ENCODE measurements at regions of chr1 and their contacts with region 1.

Region 1: DNA sequence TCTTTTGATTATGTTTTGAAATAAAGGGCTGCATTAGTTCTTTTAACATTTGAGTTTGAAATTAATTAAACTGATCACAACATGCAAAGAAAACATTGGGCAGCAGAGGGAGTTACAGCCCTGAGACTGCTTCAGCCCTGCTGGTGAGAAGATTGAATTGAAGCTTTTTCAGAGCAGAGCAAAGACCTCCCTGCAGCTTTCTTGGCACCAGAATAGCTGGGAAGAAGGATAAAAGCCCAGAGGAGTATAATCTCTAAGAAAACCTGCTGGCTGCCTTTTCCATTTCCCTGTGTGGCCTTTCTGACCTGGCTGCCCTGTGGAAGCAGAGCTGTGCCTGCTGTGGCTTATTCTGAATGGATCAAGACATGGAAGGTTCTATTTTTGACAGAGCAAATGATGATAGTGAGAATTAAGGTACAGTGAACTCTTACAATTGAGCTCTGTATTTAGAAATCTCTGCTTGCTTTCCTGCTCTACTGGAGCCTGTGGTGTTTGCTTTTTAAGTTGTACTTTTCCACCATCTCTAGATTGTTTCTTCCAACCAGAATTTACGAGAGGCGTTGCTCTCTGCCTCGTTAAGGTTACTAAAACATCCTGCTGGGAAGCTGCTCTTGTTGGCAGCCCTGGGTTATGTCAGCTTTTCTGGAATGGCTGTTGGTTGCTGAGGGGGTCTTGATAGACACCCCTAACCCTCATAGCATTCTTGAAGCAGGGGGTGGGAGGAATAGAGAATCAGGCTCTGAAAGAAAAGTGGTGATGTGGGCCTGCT is 9.9 kb downstream of the SNRPE start:
- DNase-seq: peak; percentile 70
- H3K4me3 ChIP-seq: no peak overlapping the region; a peak in 1 of 4 replicates
- H3K27ac ChIP-seq: 0 out of 4 replicates have a peak overlapping the region, but pooled peaks of 1 of the 2 experiments have one; percentile 9
- H3K4me1 ChIP-seq: 0 out of 4 replicates have a peak, but pooled peaks cover 0 to 5% of the 10 kb centered on the region in 2 experiments
- H3K27me3 ChIP-seq: no peaks in the 10 kb centered on the region
- CTCF ChIP-seq: peak; percentile 96
- EP300 ChIP-seq: no peak
- RAD21 ChIP-seq: peak; percentile 88

Region 2: DNA sequence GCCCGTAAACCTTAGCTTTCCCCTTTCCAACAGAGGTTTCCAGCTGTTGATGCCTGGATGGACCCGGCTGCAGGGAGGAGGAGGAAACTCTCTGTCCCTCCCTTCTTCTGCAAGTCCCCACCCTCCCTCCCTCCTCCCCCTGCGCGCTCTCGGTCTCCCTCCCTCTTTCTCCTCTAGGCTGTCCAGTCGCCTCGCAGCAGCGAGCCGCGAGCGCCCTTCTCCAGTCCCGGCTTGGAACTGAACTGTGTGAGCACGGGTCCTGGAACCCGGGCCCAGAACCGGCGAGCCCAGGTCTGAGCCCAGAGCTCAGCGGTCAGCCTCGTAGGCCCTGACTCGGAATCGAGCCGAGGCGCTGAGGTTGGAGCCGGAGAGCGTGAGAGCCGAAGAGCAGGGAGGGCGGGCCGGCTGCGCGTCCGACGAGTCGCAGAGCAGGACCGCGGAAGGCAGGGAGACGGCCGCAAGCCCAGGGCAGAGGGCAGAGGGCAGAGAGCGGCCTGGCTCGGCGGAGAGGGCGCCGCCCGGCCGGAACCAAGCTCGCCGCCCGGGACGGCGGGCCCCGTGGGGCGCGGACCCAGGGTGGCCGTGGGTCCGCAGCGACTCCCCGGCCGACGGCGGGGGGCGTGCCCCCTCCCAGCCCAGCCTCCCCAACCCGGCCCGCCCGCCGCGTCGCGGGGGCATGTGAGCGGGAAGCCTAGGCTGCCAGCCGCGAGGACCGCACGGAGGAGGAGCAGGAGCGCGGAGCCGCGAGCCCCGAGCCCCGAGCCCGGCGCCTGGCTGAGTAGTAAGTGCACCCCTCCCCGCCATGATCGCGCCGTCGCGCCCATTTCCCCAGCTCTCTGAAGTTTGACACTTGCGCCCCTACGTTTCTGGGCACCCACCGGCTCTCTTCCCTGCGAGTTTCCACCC is 201.9 kb after region 1 on chr1 and contains the start of gene SOX13:
- CTCF ChIA-PET with region 1: interaction called, 20 read pairs
- POLR2A ChIA-PET with region 1: no interaction called
- DNase-seq: peak; percentile 92
- H3K4me3 ChIP-seq: peak within 1 kb of the TSS; percentile 71 to 80
- H3K27ac ChIP-seq: peak within 1 kb of the TSS; percentile 44 to 57; a peak in 2 of 4 replicates
- H3K4me1 ChIP-seq: peaks cover 0 to 9% of the 10 kb centered on the region in 2 experiments; a peak in 1 of 4 replicates
- H3K27me3 ChIP-seq: no peaks in the 10 kb centered on the region
- CTCF ChIP-seq: peak; percentile 25
- EP300 ChIP-seq: no peak
- RAD21 ChIP-seq: peak; percentile 30; the same call in 1 of the 2 replicates
- polyA plus RNA-seq, gene SOX13: 7.2 and 10.6 TPM in 2 replicates